ENCODE measurements at regions of chr20 and their contacts with region 1.

Region 1: GRCh38 chr20:59032023-59032712 is at the start of gene ATP5F1E:
- DNase-seq: peak; percentile 97
- H3K4me3 Mint-ChIP-seq: peak within 1 kb of the TSS; percentile 88
- H3K27ac Mint-ChIP-seq: peak within 1 kb of the TSS; percentile 84
- H3K4me1 Mint-ChIP-seq: peaks cover 74% of the 10 kb centered on the region
- H3K27me3 Mint-ChIP-seq: no peaks in the 10 kb centered on the region
- total RNA-seq, gene ATP5F1E: 80.4 to 82.1 TPM

Region 2: DNA sequence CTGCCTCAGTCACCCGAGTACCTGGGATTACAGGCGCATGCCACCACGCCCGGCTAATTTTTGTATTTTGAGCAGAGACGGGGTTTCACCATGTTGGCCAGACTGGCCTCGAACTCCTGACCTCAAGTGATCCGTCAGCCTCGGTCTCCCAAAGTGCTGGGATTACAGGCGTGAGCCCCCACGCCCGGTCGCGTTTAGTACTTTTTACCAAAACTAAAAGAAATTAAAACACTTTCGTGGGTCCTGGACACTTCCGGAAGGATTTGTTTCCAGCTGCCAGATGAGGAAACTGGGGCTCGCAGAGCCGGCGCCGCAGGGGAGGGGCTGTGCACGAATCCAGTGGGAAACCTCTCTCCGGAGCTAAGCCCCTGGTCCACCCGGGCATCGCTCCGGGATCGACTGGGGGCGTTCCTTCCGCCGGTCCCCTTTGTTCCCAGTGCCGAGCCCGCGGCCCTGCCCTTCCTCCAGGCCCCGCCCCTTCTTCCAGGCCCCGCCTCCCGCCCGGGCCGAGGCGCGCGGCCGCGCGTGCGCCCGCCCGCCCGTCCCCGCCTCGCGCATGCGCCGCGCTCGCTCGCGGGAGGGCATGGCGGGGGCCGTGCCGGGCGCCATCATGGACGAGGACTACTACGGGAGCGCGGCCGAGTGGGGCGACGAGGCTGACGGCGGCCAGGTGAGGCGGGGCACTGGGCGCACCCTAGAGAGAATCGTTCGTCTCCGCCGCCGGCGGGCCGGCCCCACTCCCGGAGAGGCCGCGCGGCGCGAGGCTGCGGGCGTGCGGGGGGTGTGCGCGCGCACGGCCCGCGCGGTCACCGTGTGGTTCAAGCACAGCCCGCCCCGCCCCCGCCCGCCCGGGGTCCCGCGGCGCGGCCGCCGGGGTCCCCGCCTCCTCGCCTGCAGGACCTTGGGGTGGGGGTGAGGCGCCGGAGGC is 51.2 kb before region 1 on chr20 and contains the start of gene NELFCD:
- CTCF ChIA-PET with region 1: no interaction called
- POLR2A ChIA-PET with region 1: interaction called, 50 read pairs
- DNase-seq: peak; percentile 90
- H3K4me3 Mint-ChIP-seq: peak within 1 kb of the TSS; percentile 90
- H3K27ac Mint-ChIP-seq: peak within 1 kb of the TSS; percentile 79
- H3K4me1 Mint-ChIP-seq: peaks cover 37% of the 10 kb centered on the region
- H3K27me3 Mint-ChIP-seq: peaks cover 6% of the 10 kb centered on the region
- total RNA-seq, gene NELFCD: 63.3 to 69.0 TPM

Region 3: GRCh38 chr20:59006864-59007664 is 25.1 kb before region 1 on chr20 and contains the start of gene CTSZ:
- CTCF ChIA-PET with region 1: no interaction called
- POLR2A ChIA-PET with region 1: interaction called, 23 read pairs
- DNase-seq: peak; percentile 61
- H3K4me3 Mint-ChIP-seq: peak within 1 kb of the TSS; percentile 78
- H3K27ac Mint-ChIP-seq: peak within 1 kb of the TSS; percentile 59
- H3K4me1 Mint-ChIP-seq: peaks cover 59% of the 10 kb centered on the region
- H3K27me3 Mint-ChIP-seq: no peaks in the 10 kb centered on the region
- total RNA-seq, gene CTSZ: 45.0 to 49.0 TPM

Region 4: DNA sequence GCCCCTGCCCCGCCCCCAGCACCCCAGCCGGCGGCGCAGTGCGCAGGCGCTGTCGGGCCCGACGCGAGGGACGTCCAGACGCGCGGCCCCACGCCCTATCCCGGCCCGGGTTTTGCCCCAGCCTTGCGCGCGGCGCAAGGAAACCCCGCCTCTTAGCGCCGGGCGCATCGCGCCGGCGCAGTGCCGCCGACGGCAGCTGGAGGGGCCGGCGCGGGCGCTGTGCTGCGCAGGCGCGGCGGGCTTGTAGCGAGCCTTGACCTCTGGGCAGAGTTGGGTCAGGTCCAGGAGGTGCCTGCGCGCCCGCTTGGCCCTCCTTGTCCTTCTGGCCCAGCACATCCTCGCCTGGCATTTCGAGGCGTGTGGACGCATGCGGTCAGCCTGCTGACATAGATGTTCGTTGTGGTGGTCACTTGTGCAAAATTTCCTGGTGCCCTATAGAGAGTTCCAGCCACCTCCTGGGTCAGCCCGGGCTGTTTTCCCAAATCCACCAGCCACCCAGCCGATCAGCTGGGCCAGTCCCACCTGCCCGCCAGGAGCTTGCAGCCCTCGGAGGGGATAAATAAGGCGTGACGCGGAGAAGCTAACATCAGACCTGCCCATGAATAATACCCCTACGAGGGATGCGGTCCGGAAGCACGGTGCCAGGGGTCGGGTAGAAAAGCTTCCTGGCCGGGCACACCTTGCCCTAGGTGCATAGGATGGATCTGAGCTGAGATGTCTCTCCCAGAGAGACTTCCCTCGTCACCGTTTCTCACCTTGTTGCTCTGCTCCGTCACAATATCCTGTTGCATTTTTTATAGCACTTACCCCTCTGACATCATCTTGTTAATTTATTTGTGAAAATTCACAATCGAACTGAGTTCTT is 10.9 kb after region 1 on chr20:
- CTCF ChIA-PET with region 1: interaction called, 21 read pairs
- POLR2A ChIA-PET with region 1: interaction called, 80 read pairs
- DNase-seq: peak; percentile 96
- H3K4me3 Mint-ChIP-seq: peak overlapping the region; percentile 90
- H3K27ac Mint-ChIP-seq: peak overlapping the region; percentile 83
- H3K4me1 Mint-ChIP-seq: peaks cover 53% of the 10 kb centered on the region
- H3K27me3 Mint-ChIP-seq: no peaks in the 10 kb centered on the region

Region 5: DNA sequence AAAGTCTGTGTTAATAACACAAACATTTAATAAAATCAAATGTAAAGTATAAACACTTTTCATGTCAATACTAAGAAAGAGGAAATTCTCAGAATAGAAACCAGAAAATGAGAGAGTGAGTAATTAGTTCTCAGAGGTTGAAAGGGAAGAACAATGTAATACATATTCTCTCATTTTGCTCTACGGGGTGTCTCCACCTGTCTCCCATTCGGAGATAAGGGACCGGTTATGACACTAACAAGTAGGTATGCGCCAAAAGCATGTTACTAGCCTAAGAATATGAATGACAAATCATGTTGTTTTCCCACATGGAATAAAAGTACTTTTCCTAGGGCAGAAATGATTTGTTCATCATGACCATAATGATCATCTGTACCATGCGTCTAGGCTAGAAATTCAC is 46.1 kb after region 1 on chr20:
- CTCF ChIA-PET with region 1: no interaction called
- POLR2A ChIA-PET with region 1: no interaction called
- DNase-seq: no peak
- H3K4me3 Mint-ChIP-seq: no peak overlapping the region
- H3K27ac Mint-ChIP-seq: no peak overlapping the region
- H3K4me1 Mint-ChIP-seq: peaks cover 32% of the 10 kb centered on the region
- H3K27me3 Mint-ChIP-seq: peaks cover 33% of the 10 kb centered on the region

Region 6: DNA sequence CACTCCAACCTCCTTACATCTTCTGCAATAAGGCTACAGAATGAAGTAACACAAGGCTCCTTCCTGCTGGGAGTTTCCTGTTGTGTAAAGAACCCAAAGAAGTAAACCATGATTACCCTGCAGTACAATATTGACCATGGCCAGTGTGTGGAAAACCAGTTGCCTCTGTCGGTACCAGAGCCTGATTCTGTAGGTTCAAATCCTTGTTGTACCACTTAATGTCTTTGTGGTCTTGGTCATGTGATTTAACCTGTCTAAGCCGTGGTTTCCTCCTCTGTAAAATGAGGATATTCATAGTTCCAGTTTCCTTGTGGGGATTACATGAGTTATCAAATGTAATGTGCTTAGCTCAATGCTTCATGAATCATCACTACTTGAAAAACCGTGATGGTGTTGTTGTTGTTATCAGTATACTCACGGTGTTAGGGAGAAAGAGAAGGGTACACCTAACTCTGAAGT is 70.7 kb after region 1 on chr20:
- CTCF ChIA-PET with region 1: no interaction called
- POLR2A ChIA-PET with region 1: no interaction called
- DNase-seq: no peak
- H3K4me3 Mint-ChIP-seq: no peak overlapping the region
- H3K27ac Mint-ChIP-seq: no peak overlapping the region
- H3K4me1 Mint-ChIP-seq: peaks cover 11% of the 10 kb centered on the region
- H3K27me3 Mint-ChIP-seq: peaks cover 6% of the 10 kb centered on the region